Adrenal gland (tissue), 19 donors: ENCODE measurements at regions of chr12 and their contacts with region 1.

Region 1: GRCh38 chr12:50569321-50569720 is 64.5 kb downstream of the DIP2B start:
- DNase-seq: no peak
- H3K4me3 ChIP-seq: no peak overlapping the region
- H3K27ac ChIP-seq: peak overlapping the region in 3 of 5 donors; percentile 13 to 56 (median 47)
- H3K4me1 ChIP-seq: peaks cover 57 to 78% of the 10 kb centered on the region in 2 donors
- H3K27me3 ChIP-seq: no peaks in the 10 kb centered on the region
- CTCF ChIP-seq: no peak
- POLR2A ChIP-seq: no peak

Region 2: DNA sequence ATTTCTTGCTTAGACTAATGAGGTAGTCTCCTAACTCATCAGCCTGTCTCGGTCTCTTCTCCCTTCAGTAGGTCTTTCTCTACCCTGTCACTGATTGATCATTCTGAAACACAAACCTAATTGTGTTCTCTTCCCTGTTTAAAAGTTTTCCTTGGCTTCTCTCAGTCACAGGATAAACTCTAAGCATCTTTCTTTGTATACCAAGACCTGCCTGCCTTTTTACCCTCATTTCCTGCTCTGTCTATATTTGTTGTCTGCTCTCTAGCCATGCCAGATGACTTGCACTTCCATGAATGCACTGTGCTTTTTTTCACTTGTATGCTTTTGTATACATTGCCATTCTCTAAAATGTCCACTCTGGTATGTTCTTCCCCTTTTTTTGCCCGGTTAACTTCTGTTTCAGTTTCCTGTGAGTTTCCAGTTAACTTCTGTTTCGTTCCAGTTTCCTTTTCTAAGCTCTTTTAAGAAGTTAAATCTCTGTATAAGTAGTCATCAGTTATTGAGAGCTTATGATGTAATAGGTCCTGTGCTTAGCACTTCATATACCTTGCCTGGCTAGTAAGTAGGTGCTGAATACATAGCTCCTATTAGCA is 51.8 kb before region 1 on chr12:
- intact Hi-C with region 1: loop called in 1 of 2 experiments (anchors 10 kb)
- DNase-seq: no peak
- H3K4me3 ChIP-seq: no peak overlapping the region
- H3K27ac ChIP-seq: peak overlapping the region in 4 of 5 donors; percentile 4 to 51 (median 30)
- H3K4me1 ChIP-seq: peaks cover 11 to 45% of the 10 kb centered on the region in 2 donors
- H3K27me3 ChIP-seq: no peaks in the 10 kb centered on the region
- CTCF ChIP-seq: no peak
- POLR2A ChIP-seq: no peak